GM18951 (cell line): ENCODE measurements at regions of chr7 and their contacts with region 1.

Region 1: GRCh38 chr7:124152859-124153692 is 120.2 kb upstream of the TMEM229A start:
- POLR2A ChIP-seq: no peak

Region 2: GRCh38 chr7:124784879-124785818 is 632.1 kb after region 1 on chr7:
- in situ Hi-C with region 1: loop called (anchors 25 kb)
- POLR2A ChIP-seq: no peak